AG04450 (cell line): ENCODE measurements at regions of chr1 and their contacts with region 1.

Region 1: DNA sequence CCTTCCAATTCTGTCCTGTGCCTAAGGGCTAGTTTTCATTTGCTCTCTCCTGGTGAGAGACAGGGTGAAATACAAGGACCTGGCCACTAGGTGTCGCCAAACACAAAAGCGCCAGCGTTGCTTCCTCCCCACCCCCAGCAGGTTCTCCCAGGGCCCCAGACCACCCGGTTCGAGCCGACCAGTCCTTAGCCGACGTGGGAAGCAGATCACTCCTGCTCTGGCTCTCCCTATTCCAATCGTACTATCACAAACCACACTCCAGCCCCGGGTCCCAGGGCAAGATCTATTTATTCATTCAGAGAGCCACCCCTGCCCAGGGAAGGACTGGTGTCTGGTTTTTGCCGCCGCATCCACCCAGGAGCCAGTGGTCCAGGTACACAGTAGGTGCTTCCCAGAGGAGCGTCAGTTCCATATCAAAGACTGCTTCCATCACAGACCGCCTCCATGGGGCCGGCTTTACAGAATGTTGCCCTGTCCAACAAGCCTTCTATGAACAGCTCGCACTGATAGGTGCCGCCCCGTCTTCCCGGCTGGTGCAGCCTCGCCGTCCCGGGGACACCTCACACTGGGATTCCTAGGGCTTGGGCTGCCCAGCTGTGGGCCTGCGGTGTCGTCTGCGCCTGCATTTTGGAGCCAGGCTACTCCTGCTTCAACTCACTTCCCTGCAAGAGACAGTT is 35.0 kb downstream of the CTNNBIP1 start:
- DNase-seq: peak; percentile 44
- H3K4me3 ChIP-seq: peak overlapping the region; percentile 7; the same call in 1 of the 2 replicates
- H3K27ac ChIP-seq: no peak overlapping the region
- H3K27me3 ChIP-seq: no peaks in the 10 kb centered on the region
- CTCF ChIP-seq: peak; percentile 95

Region 2: GRCh38 chr1:9835758-9836450 is 39.2 kb before region 1 on chr1:
- CTCF ChIA-PET with region 1: no interaction called
- POLR2A ChIA-PET with region 1: no interaction called
- DNase-seq: no peak
- H3K4me3 ChIP-seq: no peak overlapping the region
- H3K27ac ChIP-seq: no peak overlapping the region
- H3K27me3 ChIP-seq: no peaks in the 10 kb centered on the region
- CTCF ChIP-seq: no peak

Region 3: DNA sequence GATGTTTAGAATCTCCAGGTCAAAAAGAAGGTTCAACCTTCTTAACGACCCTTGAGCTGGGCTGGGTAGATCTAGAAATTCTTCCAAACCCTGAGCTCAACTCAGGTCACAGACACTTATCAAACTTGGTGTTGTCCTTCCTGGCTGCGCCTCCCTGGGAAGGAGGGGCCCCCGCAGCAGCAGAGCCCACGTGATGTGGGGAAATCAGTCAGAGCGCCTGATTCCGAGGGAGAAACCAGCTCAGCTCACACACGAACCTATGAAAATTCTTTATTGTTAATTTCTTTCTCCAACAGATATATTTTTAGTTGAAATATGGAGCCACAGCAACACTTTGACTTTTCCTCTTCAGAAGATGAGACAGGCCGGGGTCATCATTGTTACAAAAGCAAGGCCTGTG is 27.1 kb before region 1 on chr1:
- CTCF ChIA-PET with region 1: no interaction called
- POLR2A ChIA-PET with region 1: no interaction called
- DNase-seq: no peak
- H3K4me3 ChIP-seq: no peak overlapping the region
- H3K27ac ChIP-seq: no peak overlapping the region
- H3K27me3 ChIP-seq: no peaks in the 10 kb centered on the region
- CTCF ChIP-seq: no peak

Region 4: GRCh38 chr1:9890224-9890731 is 15.2 kb after region 1 on chr1:
- CTCF ChIA-PET with region 1: interaction called, 21 read pairs
- POLR2A ChIA-PET with region 1: interaction called, 5 read pairs
- DNase-seq: peak; percentile 90
- H3K4me3 ChIP-seq: no peak overlapping the region
- H3K27ac ChIP-seq: peak overlapping the region; percentile 97
- H3K27me3 ChIP-seq: no peaks in the 10 kb centered on the region
- CTCF ChIP-seq: no peak

Region 5: GRCh38 chr1:9942939-9943788 is 68.1 kb after region 1 on chr1 and contains the starts of genes LZIC and NMNAT1:
- CTCF ChIA-PET with region 1: interaction called, 73 read pairs
- POLR2A ChIA-PET with region 1: interaction called, 11 read pairs
- DNase-seq: peak; percentile 86
- H3K4me3 ChIP-seq: peak within 1 kb of the TSS; percentile 90
- H3K27ac ChIP-seq: peak within 1 kb of the TSS; percentile 90
- H3K27me3 ChIP-seq: no peaks in the 10 kb centered on the region
- CTCF ChIP-seq: no peak
- polyA plus RNA-seq, gene LZIC: 21.6 and 29.7 TPM in 2 replicates
- polyA plus RNA-seq, gene NMNAT1: 15.8 and 16.4 TPM in 2 replicates